ENCODE measurements at regions of chr7 and their contacts with region 1.

Region 1: DNA sequence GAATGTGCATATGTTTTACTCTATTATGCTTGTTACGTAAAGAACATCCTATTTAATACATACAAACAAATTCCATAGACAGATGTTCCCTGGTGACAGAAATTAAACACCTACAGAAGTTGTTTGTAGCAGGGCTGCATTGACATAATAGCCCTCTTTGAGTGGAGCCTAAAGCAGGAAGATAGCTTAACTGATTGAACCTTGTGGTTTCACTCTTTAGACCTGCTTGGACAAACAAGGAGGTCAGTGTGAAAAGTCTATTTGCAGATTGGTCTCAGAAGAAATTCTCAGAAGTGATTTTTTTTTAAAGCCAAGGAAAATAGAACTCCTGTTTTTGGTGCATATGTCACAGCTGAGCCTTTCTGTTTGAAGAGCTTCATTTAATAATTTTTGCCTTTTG is 121.3 kb downstream of the PPP1R9A start:
- DNase-seq: no peak
- H3K4me3 ChIP-seq: no peak overlapping the region
- H3K27ac ChIP-seq: no peak overlapping the region
- H3K4me1 ChIP-seq: no peaks in the 10 kb centered on the region
- H3K27me3 ChIP-seq: no peaks in the 10 kb centered on the region
- CTCF ChIP-seq: no peak
- EP300 ChIP-seq: no peak
- POLR2A ChIP-seq: no peak

Region 2: GRCh38 chr7:95501261-95501832 is 472.7 kb after region 1 on chr7:
- intact Hi-C with region 1: loop called in 1 of 4 experiments (anchors 5 kb)
- DNase-seq: no peak
- H3K4me3 ChIP-seq: no peak overlapping the region
- H3K27ac ChIP-seq: no peak overlapping the region
- H3K4me1 ChIP-seq: no peaks in the 10 kb centered on the region
- H3K27me3 ChIP-seq: no peaks in the 10 kb centered on the region
- CTCF ChIP-seq: no peak
- EP300 ChIP-seq: no peak
- POLR2A ChIP-seq: no peak

Measured in ovary (tissue), 10 donors.